GM12878 (cell line): ENCODE measurements at regions of chr9 and their contacts with region 1.

Region 1: GRCh38 chr9:111926421-111926875 is 29.8 kb downstream of the UGCG start:
- DNase-seq: peak; percentile 86
- ATAC-seq: peak; percentile 98
- H3K4me3 ChIP-seq: no peak overlapping the region
- H3K27ac ChIP-seq: peak overlapping the region; percentile 75
- H3K4me1 ChIP-seq: peaks cover 13% of the 10 kb centered on the region; the same call in 1 of the 2 replicates
- H3K27me3 ChIP-seq: no peaks in the 10 kb centered on the region
- CTCF ChIP-seq: no peak
- EP300 ChIP-seq: peak; percentile 73 to 76; a peak in 3 of 4 replicates
- POLR2A ChIP-seq: no peak
- RAD21 ChIP-seq: no peak

Region 2: GRCh38 chr9:111839388-111839787 is 87.1 kb before region 1 on chr9:
- CTCF ChIA-PET with region 1: no interaction called
- POLR2A ChIA-PET with region 1: no interaction called
- RAD21 ChIA-PET with region 1: no interaction called
- SMC1A ChIA-PET with region 1: no interaction called
- in situ Hi-C with region 1: no loop called
- intact Hi-C with region 1: no loop called
- DNase-seq: peak; percentile 39
- ATAC-seq: peak; percentile 88
- H3K4me3 ChIP-seq: no peak overlapping the region
- H3K27ac ChIP-seq: no peak overlapping the region
- H3K4me1 ChIP-seq: peaks cover 8% of the 10 kb centered on the region; the same call in 1 of the 2 replicates
- H3K27me3 ChIP-seq: no peaks in the 10 kb centered on the region
- CTCF ChIP-seq: no peak
- EP300 ChIP-seq: no peak
- POLR2A ChIP-seq: no peak
- RAD21 ChIP-seq: no peak

Region 3: DNA sequence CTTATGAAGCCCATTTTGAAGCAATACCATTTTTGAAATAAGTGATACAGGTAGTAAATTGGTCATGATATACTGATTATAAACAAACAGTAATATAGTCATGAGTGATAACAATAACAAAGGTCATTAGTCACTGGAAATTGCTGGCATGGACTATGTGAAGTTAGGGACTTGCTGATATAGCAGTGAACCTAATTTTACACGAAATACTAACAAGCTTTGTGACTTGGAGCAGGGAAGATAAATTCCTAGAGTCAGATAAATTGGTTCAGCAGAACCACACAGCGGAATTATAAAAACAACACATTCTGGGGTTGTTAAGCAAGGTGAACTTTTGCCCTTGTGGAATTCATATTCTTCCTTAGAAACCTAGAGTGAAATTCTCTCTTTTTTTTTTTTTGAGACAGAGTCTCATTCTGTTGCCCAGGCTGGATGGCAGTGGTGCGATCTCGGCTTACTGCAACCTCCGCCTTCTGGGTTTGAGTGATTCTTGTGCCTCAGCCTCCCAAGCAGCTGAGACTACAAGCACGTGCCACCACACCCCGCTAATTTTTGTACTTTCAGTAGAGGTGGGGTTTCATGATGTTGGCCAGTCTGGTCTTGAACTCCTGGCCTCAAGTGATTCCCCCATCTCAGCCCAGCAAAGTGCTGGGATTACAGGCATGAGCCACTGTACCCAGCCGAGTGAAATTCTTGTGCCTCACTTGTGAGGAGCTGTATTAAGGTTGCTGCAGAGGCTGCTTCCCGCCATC is 23.9 kb before region 1 on chr9:
- CTCF ChIA-PET with region 1: no interaction called
- POLR2A ChIA-PET with region 1: interaction called, 8 read pairs
- RAD21 ChIA-PET with region 1: interaction called, 18 read pairs
- SMC1A ChIA-PET with region 1: interaction called, 16 read pairs
- in situ Hi-C with region 1: no loop called
- intact Hi-C with region 1: no loop called
- DNase-seq: no peak
- ATAC-seq: no peak
- H3K4me3 ChIP-seq: peak overlapping the region; percentile 80; the same call in 1 of the 2 replicates
- H3K27ac ChIP-seq: peak overlapping the region; percentile 37; the same call in 1 of the 2 replicates
- H3K4me1 ChIP-seq: peaks cover 26% of the 10 kb centered on the region
- H3K27me3 ChIP-seq: no peaks in the 10 kb centered on the region
- CTCF ChIP-seq: no peak
- EP300 ChIP-seq: no peak
- POLR2A ChIP-seq: no peak
- RAD21 ChIP-seq: no peak

Region 4: DNA sequence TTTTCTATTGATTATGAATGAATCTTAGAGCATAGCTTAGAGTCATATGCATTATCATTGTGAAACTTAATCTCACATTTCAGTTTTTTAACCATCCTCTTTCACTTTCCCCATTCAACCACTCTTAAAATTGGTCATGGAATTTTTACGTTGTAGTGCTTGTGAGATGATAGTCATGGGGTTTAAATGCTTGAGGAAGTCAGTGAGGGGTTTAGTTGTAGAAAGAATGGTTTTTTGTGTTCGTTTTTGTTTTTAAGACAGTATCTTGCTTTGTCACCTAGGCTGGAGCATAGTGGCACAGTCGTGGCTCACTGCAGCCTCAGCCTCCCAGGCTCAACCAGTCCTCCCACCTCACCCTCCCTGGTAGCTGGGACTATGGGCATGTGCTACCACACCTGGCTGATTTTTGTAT is 10.2 kb before region 1 on chr9:
- CTCF ChIA-PET with region 1: interaction called, 25 read pairs
- POLR2A ChIA-PET with region 1: interaction called, 11 read pairs
- RAD21 ChIA-PET with region 1: interaction called, 20 read pairs
- SMC1A ChIA-PET with region 1: interaction called, 43 read pairs
- in situ Hi-C with region 1: no loop called
- intact Hi-C with region 1: no loop called
- DNase-seq: no peak
- ATAC-seq: peak; percentile 67
- H3K4me3 ChIP-seq: peak overlapping the region; percentile 54; the same call in 1 of the 2 replicates
- H3K27ac ChIP-seq: peak overlapping the region; percentile 76
- H3K4me1 ChIP-seq: peaks cover 47% of the 10 kb centered on the region
- H3K27me3 ChIP-seq: no peaks in the 10 kb centered on the region
- CTCF ChIP-seq: no peak
- EP300 ChIP-seq: peak; percentile 42 to 60; a peak in 3 of 4 replicates
- POLR2A ChIP-seq: no peak
- RAD21 ChIP-seq: no peak

Region 5: GRCh38 chr9:111965566-111966019 is 39.1 kb after region 1 on chr9:
- CTCF ChIA-PET with region 1: interaction called, 3 read pairs
- POLR2A ChIA-PET with region 1: interaction called, 6 read pairs
- RAD21 ChIA-PET with region 1: interaction called, 4 read pairs
- SMC1A ChIA-PET with region 1: interaction called, 17 read pairs
- in situ Hi-C with region 1: no loop called
- intact Hi-C with region 1: no loop called
- DNase-seq: peak; percentile 90
- ATAC-seq: peak; percentile 80
- H3K4me3 ChIP-seq: no peak overlapping the region
- H3K27ac ChIP-seq: peak overlapping the region; percentile 56
- H3K4me1 ChIP-seq: peaks cover 25% of the 10 kb centered on the region
- H3K27me3 ChIP-seq: no peaks in the 10 kb centered on the region
- CTCF ChIP-seq: no peak
- EP300 ChIP-seq: peak; percentile 82 to 89
- POLR2A ChIP-seq: no peak
- RAD21 ChIP-seq: 0 out of 2 replicates have a peak, but pooled peaks have one; percentile 3

Region 6: GRCh38 chr9:112112941-112113681 is 186.7 kb after region 1 on chr9:
- CTCF ChIA-PET with region 1: no interaction called
- POLR2A ChIA-PET with region 1: no interaction called
- RAD21 ChIA-PET with region 1: no interaction called
- SMC1A ChIA-PET with region 1: no interaction called
- in situ Hi-C with region 1: no loop called
- intact Hi-C with region 1: no loop called
- DNase-seq: no peak
- ATAC-seq: peak; percentile 75
- H3K4me3 ChIP-seq: no peak overlapping the region
- H3K27ac ChIP-seq: no peak overlapping the region
- H3K4me1 ChIP-seq: no peaks in the 10 kb centered on the region
- H3K27me3 ChIP-seq: no peaks in the 10 kb centered on the region
- CTCF ChIP-seq: peak; percentile 56 to 74 (median 57); a peak in 5 of 6 replicates
- EP300 ChIP-seq: no peak
- POLR2A ChIP-seq: no peak
- RAD21 ChIP-seq: peak; percentile 88